ENCODE measurements at regions of chr10 and their contacts with region 1.

Region 1: GRCh38 chr10:73609116-73609515 is 18.0 kb upstream of the USP54 start:
- DNase-seq: no peak
- H3K4me3 ChIP-seq: no peak overlapping the region
- H3K27ac ChIP-seq: no peak overlapping the region
- H3K4me1 ChIP-seq: no peaks in the 10 kb centered on the region
- H3K27me3 ChIP-seq: no peaks in the 10 kb centered on the region
- CTCF ChIP-seq: no peak
- EP300 ChIP-seq: no peak
- POLR2A ChIP-seq: no peak

Region 2: DNA sequence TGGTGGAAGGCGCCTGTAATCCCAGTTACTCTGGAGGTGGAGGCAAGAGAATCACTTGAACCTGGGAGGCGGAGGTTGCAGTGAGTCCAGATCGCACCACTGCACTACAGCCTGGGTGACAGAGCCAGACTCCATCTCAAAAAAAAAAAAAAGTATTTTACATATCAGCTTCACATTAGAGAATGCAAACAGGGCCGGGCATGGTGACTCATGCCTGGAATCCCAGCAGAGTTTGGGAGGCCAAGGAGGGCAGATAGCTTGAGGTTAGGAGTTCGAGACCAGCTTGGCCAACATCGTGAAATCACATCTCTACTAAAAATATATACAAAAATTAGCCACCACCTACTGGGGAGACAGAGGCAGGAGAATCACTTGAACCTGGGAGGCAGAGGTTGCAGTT is 49.5 kb before region 1 on chr10:
- intact Hi-C with region 1: loop called (anchors 5 kb)
- DNase-seq: no peak
- H3K4me3 ChIP-seq: no peak overlapping the region
- H3K27ac ChIP-seq: no peak overlapping the region
- H3K4me1 ChIP-seq: peaks cover 0 to 6% (median 2%) of the 10 kb centered on the region in 4 donors
- H3K27me3 ChIP-seq: no peaks in the 10 kb centered on the region
- CTCF ChIP-seq: no peak
- EP300 ChIP-seq: no peak
- POLR2A ChIP-seq: no peak

Region 3: DNA sequence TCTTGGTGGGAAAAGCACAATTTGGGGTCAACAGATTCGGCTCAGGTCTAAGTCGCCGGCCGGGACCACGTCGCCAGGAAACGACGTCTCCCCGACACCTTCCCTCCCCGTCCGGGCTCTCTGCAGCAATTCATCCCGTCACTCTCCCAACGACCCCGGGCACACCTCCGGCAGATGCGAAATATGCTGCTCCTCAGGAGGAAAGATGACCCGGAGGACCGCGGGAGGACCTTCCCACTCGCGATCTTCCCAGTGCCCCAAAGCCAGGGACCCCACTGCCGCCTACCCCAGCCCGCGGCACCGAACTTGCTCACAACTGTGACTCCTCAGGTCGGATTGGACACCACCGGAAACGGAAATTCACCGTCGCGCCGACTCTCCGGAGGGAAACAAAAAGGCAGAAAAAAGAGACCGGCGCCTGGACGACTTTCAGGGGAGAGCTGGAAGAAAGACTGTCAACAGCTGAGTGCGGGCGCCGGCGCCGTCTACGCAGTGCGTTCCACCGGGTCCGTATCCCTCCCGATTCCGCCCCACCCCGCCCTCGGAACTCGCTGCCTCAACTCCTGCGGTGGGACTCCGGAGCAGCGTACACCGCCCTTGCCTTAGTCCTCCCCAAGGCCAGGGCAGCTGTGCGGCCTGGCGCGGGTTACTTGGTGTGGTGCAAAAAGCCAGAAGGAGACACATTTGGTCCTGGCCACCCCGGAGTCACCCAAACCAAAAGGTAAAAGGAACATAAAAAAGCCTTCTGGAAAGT is 121.2 kb after region 1 on chr10:
- intact Hi-C with region 1: no loop called
- DNase-seq: peak; percentile 94
- H3K4me3 ChIP-seq: peak overlapping the region; percentile 58 to 91 (median 74)
- H3K27ac ChIP-seq: peak overlapping the region; percentile 88 to 94 (median 92)
- H3K4me1 ChIP-seq: peaks cover 0 to 50% (median 29%) of the 10 kb centered on the region in 4 donors
- H3K27me3 ChIP-seq: no peaks in the 10 kb centered on the region
- CTCF ChIP-seq: no peak
- EP300 ChIP-seq: no peak
- POLR2A ChIP-seq: peak; percentile 34 to 45

Measured in sigmoid colon (tissue), 7 donors.